Activated CD4-positive, alpha-beta memory T cell treated with anti-CD3 and anti-CD28 coated beads for 36 hours (primary cell): ENCODE measurements at regions of chrX and their contacts with region 1.

Region 1: GRCh38 chrX:69615779-69616456 is at the start of gene EDA:
- DNase-seq: peak; percentile 80
- H3K4me3 Mint-ChIP-seq: peak within 1 kb of the TSS; percentile 79
- H3K27ac Mint-ChIP-seq: no peak within 1 kb of the TSS
- H3K4me1 Mint-ChIP-seq: peaks cover 19% of the 10 kb centered on the region
- H3K27me3 Mint-ChIP-seq: peaks cover 4% of the 10 kb centered on the region
- total RNA-seq, gene EDA: 3.3 to 4.2 TPM

Region 2: DNA sequence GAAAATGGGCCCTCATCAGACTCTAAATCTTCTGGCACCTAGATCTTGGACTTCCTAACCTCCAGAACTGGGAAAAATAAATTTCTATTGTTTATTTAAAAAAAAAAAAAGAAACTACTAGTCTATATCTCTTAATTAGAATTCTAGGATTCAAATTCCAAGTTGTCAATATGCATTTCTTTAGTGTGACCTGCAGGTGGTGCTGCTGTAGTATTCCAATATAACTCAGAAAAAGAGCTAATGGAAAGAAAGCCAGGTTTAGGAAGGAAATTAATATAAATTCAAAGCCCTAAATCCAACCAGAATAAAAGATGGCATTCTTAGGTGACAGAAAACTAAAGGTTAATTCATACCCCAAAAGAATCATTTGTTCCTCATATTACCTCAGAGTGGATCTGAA is 191.8 kb before region 1 on chrX:
- CTCF ChIA-PET with region 1: no interaction called
- POLR2A ChIA-PET with region 1: no interaction called
- intact Hi-C with region 1: no loop called
- DNase-seq: no peak
- H3K4me3 Mint-ChIP-seq: no peak overlapping the region
- H3K27ac Mint-ChIP-seq: no peak overlapping the region
- H3K4me1 Mint-ChIP-seq: no peaks in the 10 kb centered on the region
- H3K27me3 Mint-ChIP-seq: peaks cover 3% of the 10 kb centered on the region

Region 3: DNA sequence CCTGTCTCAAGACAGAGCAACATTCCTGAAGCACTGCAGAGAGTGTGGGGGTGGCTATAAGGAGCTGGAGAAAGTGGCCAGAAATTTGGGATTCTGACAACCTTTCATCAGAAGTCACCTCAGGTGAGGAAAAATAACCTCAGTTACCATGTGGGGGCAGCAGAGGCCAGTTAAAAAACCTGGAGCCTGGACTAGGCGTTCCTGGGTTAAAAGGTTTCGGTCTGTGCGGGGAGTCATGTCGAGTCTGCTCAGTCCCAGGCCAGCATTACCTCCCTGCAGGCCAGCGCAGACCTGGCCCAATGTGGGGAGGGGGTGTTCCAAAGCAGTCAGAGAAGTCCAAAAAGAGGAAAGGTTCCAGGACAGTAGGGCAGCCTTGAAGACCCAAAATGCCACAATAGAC is 122.7 kb before region 1 on chrX:
- CTCF ChIA-PET with region 1: no interaction called
- POLR2A ChIA-PET with region 1: no interaction called
- intact Hi-C with region 1: loop called (anchors 5 kb)
- DNase-seq: peak; percentile 39
- H3K4me3 Mint-ChIP-seq: no peak overlapping the region
- H3K27ac Mint-ChIP-seq: no peak overlapping the region
- H3K4me1 Mint-ChIP-seq: peaks cover 2% of the 10 kb centered on the region
- H3K27me3 Mint-ChIP-seq: peaks cover 10% of the 10 kb centered on the region

Region 4: GRCh38 chrX:69538321-69538876 is 77.5 kb before region 1 on chrX:
- CTCF ChIA-PET with region 1: interaction called, 14 read pairs
- POLR2A ChIA-PET with region 1: no interaction called
- intact Hi-C with region 1: loop called (anchors 2 kb)
- DNase-seq: peak; percentile 78
- H3K4me3 Mint-ChIP-seq: peak overlapping the region; percentile 35
- H3K27ac Mint-ChIP-seq: no peak overlapping the region
- H3K4me1 Mint-ChIP-seq: peaks cover 17% of the 10 kb centered on the region
- H3K27me3 Mint-ChIP-seq: peaks cover 1% of the 10 kb centered on the region

Region 5: GRCh38 chrX:69568828-69569227 is 47.1 kb before region 1 on chrX:
- CTCF ChIA-PET with region 1: no interaction called
- POLR2A ChIA-PET with region 1: no interaction called
- intact Hi-C with region 1: no loop called
- DNase-seq: no peak
- H3K4me3 Mint-ChIP-seq: no peak overlapping the region
- H3K27ac Mint-ChIP-seq: no peak overlapping the region
- H3K4me1 Mint-ChIP-seq: no peaks in the 10 kb centered on the region
- H3K27me3 Mint-ChIP-seq: no peaks in the 10 kb centered on the region

Region 6: GRCh38 chrX:69961365-69962072 is 345.6 kb after region 1 on chrX:
- CTCF ChIA-PET with region 1: no interaction called
- POLR2A ChIA-PET with region 1: no interaction called
- intact Hi-C with region 1: loop called (anchors 5 kb)
- DNase-seq: no peak
- H3K4me3 Mint-ChIP-seq: no peak overlapping the region
- H3K27ac Mint-ChIP-seq: no peak overlapping the region
- H3K4me1 Mint-ChIP-seq: peaks cover 3% of the 10 kb centered on the region
- H3K27me3 Mint-ChIP-seq: no peaks in the 10 kb centered on the region

Region 7: DNA sequence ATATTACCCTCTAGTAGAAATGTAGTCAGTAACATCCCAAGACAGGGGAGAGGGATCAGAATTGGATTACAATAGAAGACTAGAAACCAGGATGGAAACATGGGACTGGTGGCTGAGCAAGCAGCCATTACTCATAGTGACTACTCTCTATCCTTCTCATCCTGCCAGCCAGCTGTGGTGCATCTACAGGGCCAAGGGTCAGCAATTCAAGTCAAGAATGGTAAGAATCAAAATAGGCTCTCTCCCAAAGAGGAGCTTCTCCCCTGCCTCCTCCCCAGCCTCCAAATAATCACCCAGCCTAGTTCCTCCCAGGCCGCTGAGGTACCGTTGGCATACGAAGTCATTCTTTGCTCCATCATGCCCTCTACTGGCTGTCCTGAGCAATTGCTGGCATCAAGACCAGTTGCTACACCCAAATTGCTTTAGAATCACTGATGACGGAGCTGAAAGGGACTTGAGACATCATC is 414.4 kb after region 1 on chrX:
- CTCF ChIA-PET with region 1: interaction called, 3 read pairs
- POLR2A ChIA-PET with region 1: no interaction called
- intact Hi-C with region 1: loop called (anchors 5 kb)
- DNase-seq: peak; percentile 51
- H3K4me3 Mint-ChIP-seq: no peak overlapping the region
- H3K27ac Mint-ChIP-seq: no peak overlapping the region
- H3K4me1 Mint-ChIP-seq: peaks cover 23% of the 10 kb centered on the region
- H3K27me3 Mint-ChIP-seq: no peaks in the 10 kb centered on the region

Region 8: GRCh38 chrX:70133303-70134115 is 517.6 kb after region 1 on chrX and contains the start of gene IGBP1:
- CTCF ChIA-PET with region 1: no interaction called
- POLR2A ChIA-PET with region 1: no interaction called
- intact Hi-C with region 1: loop called (anchors 5 kb)
- DNase-seq: peak; percentile 85
- H3K4me3 Mint-ChIP-seq: peak within 1 kb of the TSS; percentile 98
- H3K27ac Mint-ChIP-seq: peak within 1 kb of the TSS; percentile 96
- H3K4me1 Mint-ChIP-seq: peaks cover 24% of the 10 kb centered on the region
- H3K27me3 Mint-ChIP-seq: no peaks in the 10 kb centered on the region
- total RNA-seq, gene IGBP1: 50.8 to 51.5 TPM

Region 9: DNA sequence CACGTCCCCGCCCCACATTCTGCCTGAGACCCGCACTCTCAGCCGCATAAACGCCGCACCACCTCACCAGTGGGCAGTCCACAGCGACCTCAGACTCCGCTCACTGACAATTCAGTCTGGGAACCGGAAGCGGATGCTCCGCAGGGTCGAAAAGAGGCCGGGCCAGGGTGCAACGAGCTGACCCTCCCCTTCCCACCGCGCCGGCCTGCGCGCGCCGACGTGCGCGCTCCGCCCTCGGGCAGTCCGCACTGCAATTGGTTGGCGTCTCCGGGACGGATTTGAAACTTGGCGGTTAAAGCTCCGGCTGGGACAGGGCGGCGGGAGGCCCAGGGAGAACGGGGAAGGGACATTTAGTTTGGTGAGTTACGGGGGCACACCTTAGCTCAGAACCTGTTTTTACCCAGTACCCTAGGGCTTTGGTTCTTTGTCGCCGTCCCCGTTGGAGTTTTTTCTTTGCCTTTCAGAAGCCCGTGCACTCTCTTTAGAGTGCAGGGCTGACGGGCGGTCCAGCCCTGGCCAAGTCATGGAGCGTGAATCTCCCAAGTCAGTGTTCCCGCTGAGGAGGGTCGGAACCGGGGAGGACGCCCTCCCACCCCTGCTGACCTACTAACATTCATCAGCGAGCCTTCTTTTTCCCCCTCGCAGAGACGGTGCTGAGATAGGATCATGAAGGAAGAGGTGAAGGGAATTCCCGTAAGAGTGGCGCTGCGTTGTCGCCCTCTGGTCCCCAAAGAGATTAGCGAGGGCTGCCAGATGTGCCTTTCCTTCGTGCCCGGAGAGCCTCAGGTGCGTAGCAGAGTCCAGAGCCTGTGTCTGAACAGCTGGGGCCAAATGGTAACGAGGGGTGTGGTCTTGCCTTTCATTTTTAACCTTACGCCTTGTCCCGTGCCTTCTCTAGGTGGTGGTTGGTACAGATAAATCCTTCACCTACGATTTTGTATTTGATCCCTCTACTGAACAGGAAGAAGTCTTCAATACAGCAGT is 674.2 kb after region 1 on chrX and contains the starts of genes KIF4A and PDZD11:
- CTCF ChIA-PET with region 1: no interaction called
- POLR2A ChIA-PET with region 1: no interaction called
- intact Hi-C with region 1: loop called (anchors 2 kb)
- DNase-seq: peak; percentile 90
- H3K4me3 Mint-ChIP-seq: peak within 1 kb of the TSS; percentile 91
- H3K27ac Mint-ChIP-seq: peak within 1 kb of the TSS; percentile 74
- H3K4me1 Mint-ChIP-seq: peaks cover 10% of the 10 kb centered on the region
- H3K27me3 Mint-ChIP-seq: no peaks in the 10 kb centered on the region
- total RNA-seq, gene KIF4A: 26.4 to 28.3 TPM
- total RNA-seq, gene PDZD11: 25.9 to 28.1 TPM